Colonic mucosa (tissue), 4 donors: ENCODE measurements at regions of chr16 and their contacts with region 1.

Region 1: DNA sequence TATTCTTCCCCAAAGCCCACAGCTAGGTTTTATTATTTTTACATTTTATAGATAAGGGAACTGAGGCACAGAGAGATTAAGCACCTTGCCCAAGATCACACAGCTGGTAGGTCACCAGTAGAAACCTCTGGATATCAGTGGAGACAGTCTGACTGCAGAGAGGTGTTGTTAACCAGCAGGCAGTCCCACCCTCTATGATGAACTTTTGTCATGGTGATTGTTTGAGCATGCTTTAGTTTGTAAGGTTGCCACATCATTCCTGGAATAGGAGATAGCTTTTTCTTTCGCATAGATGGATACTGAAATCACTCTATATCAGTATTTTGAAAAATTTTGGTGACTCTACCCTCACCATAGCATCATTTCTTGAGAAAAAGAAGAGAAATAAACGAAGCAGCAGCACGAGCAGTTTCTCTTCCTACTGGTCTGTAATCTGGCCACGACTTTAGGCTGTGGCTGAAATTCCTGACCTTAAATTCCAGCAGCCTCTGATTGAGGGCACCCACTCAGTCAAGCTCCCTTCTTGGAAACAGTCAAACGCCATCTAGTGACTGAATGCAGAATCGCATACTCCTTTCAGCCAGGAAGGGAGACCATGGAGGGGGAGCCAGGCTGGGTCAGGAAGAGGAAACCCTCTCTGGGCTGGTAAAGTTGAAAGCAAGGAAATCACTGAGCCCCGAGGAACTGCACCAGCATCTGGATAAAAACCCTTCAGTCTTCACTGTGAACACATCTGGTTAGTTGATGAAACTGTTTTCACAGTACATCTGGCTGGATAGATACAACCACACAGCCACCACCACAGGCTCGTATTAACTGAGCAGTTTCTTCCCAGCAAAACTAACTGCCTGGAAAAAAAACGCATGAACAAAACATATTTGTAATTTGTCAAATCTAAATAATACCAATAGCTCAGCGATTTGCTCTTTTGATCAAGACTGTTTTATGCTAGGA is 108.4 kb upstream of the XYLT1 start:
- DNase-seq: peak; percentile 77
- H3K4me3 ChIP-seq: no peak overlapping the region
- H3K27ac ChIP-seq: no peak overlapping the region
- H3K4me1 ChIP-seq: no peaks in the 10 kb centered on the region
- H3K27me3 ChIP-seq: no peaks in the 10 kb centered on the region
- CTCF ChIP-seq: peak; percentile 79

Region 2: DNA sequence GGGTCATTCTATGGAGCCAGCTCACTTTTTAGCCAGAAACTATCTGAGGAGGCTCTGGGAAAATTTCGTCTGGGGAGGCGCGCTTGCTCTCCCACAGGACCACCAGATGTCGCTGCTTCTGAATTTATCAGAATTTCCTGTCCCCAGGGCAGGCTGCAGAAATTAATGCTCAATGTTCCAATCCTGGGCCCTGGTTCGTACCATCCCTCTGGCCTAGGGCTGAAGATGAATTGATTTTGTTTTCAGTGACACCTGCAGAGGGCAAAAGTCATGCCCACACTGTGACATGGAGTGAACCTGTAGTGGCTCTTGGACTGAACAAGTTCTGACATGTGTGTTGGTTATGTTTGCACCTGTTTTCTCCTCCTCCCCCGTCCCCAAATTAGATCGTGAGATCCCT is 717.7 kb before region 1 on chr16:
- intact Hi-C with region 1: loop called (anchors 5 kb)
- DNase-seq: peak; percentile 52
- H3K4me3 ChIP-seq: no peak overlapping the region
- H3K27ac ChIP-seq: no peak overlapping the region
- H3K4me1 ChIP-seq: no peaks in the 10 kb centered on the region
- H3K27me3 ChIP-seq: no peaks in the 10 kb centered on the region
- CTCF ChIP-seq: peak; percentile 81

Region 3: GRCh38 chr16:17196526-17196925 is 382.7 kb before region 1 on chr16:
- intact Hi-C with region 1: loop called (anchors 5 kb)
- DNase-seq: no peak
- H3K4me3 ChIP-seq: no peak overlapping the region
- H3K27ac ChIP-seq: no peak overlapping the region
- H3K4me1 ChIP-seq: no peaks in the 10 kb centered on the region
- H3K27me3 ChIP-seq: no peaks in the 10 kb centered on the region
- CTCF ChIP-seq: no peak

Region 4: GRCh38 chr16:17476414-17477270 is 102.6 kb before region 1 on chr16:
- intact Hi-C with region 1: loop called (anchors 5 kb)
- DNase-seq: peak; percentile 63
- H3K4me3 ChIP-seq: no peak overlapping the region
- H3K27ac ChIP-seq: no peak overlapping the region
- H3K4me1 ChIP-seq: no peaks in the 10 kb centered on the region
- H3K27me3 ChIP-seq: no peaks in the 10 kb centered on the region
- CTCF ChIP-seq: peak; percentile 23